Calu3 (cell line): ENCODE measurements at regions of chr6 and their contacts with region 1.

Region 1: DNA sequence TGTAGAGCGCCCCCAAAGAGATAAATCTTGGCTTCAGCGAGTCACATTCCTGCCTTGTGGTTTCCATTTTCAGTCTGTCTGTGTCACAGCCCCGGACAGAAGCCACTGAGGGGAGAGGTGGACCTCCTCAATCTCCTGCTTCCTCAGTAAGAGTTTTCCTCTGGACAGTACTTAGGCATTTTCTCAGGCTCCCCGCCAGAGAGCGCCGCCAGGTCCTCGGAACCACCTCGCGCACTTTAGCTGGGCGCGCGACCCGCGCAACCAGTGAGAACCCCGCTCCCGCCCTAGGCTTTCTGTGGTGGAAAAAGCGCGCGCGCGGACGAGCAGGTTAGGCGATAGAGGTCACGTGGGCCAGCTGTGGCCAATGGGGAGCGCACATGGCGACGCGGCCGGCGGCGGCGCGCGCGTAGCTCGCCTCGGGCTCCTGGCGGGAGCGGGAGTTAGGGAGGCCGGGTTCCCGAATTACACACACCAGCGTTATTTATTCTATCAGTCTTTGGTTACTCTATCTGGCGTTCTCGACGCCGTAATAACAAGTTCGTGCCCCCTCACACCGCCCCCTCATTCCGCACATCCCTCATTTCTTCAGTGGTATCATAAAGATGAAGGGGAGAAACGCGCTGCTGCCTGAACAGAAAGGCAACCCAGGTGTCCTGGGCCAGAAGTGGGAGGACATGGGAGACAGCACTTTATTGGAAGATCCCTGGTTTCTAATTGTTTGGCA is 19.4 kb downstream of the PXT1 start:
- DNase-seq: peak; percentile 99
- H3K4me3 Mint-ChIP-seq: peak overlapping the region; percentile 74
- H3K27ac Mint-ChIP-seq: peak overlapping the region; percentile 85
- H3K4me1 Mint-ChIP-seq: peaks cover 18% of the 10 kb centered on the region
- H3K27me3 Mint-ChIP-seq: no peaks in the 10 kb centered on the region
- CTCF ChIP-seq: peak; percentile 54

Region 2: GRCh38 chr6:36442671-36443470 is 19.6 kb after region 1 on chr6 and contains the starts of genes KCTD20 and PXT1:
- CTCF ChIA-PET with region 1: interaction called, 11 read pairs
- intact Hi-C with region 1: no loop called
- DNase-seq: peak; percentile 94
- H3K4me3 Mint-ChIP-seq: peak within 1 kb of the TSS; percentile 95
- H3K27ac Mint-ChIP-seq: peak within 1 kb of the TSS; percentile 95
- H3K4me1 Mint-ChIP-seq: peaks cover 32% of the 10 kb centered on the region
- H3K27me3 Mint-ChIP-seq: no peaks in the 10 kb centered on the region
- CTCF ChIP-seq: no peak
- total RNA-seq, gene KCTD20: 43.3 and 45.1 TPM in 2 replicates
- total RNA-seq, gene PXT1: 0.21 TPM in 1 of 2 replicates, not detected in the other

Region 3: GRCh38 chr6:36493859-36494258 is 70.6 kb after region 1 on chr6:
- CTCF ChIA-PET with region 1: no interaction called
- intact Hi-C with region 1: no loop called
- DNase-seq: no peak
- H3K4me3 Mint-ChIP-seq: no peak overlapping the region
- H3K27ac Mint-ChIP-seq: peak overlapping the region; percentile 18
- H3K4me1 Mint-ChIP-seq: no peaks in the 10 kb centered on the region
- H3K27me3 Mint-ChIP-seq: no peaks in the 10 kb centered on the region
- CTCF ChIP-seq: no peak

Region 4: DNA sequence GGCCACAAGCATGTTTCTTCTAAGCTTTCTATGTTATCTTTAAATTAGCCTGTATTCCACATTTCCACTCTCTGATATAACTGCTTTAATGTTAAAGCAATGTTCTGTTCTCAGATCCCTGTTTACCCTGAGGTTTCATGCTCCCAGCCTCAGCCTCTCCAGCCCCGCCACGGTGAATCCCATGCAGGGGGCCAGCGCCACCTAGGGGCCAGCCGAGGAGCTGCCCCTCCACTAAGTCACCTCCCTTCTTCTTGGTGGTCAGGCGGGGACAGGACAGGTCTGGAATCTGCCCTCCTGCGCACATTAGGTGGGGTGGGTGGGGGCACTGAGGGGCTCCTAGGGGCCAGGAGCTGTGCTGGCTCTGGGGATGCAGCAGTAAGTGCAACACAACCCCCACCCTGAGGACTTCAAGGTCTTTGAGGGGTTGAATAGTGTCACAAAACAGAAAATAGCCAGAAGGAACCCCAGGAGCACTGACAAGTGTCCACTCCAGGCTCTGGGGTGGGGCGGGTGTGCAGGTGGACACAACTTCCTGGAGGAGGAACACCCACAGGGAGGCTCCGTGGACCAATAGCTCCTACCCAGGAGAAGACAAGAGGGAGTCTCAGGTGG is 336.0 kb after region 1 on chr6:
- CTCF ChIA-PET with region 1: no interaction called
- intact Hi-C with region 1: loop called (anchors 2 kb)
- DNase-seq: peak; percentile 94
- H3K4me3 Mint-ChIP-seq: no peak overlapping the region
- H3K27ac Mint-ChIP-seq: no peak overlapping the region
- H3K4me1 Mint-ChIP-seq: peaks cover 49% of the 10 kb centered on the region
- H3K27me3 Mint-ChIP-seq: no peaks in the 10 kb centered on the region
- CTCF ChIP-seq: peak; percentile 94